Testis (tissue), 5 donors: ENCODE measurements at regions of chr2 and their contacts with region 1.

Region 1: GRCh38 chr2:61928826-61929461 is 23.5 kb downstream of the COMMD1 start:
- DNase-seq: no peak
- H3K4me3 ChIP-seq: no peak overlapping the region
- H3K27ac ChIP-seq: peak overlapping the region; percentile 50 to 51
- H3K4me1 ChIP-seq: no peaks in the 10 kb centered on the region
- H3K27me3 ChIP-seq: no peaks in the 10 kb centered on the region
- CTCF ChIP-seq: no peak
- POLR2A ChIP-seq: no peak

Region 2: GRCh38 chr2:61707969-61708852 is 220.7 kb before region 1 on chr2:
- intact Hi-C with region 1: no loop called
- DNase-seq: no peak
- H3K4me3 ChIP-seq: no peak overlapping the region
- H3K27ac ChIP-seq: no peak overlapping the region
- H3K4me1 ChIP-seq: no peaks in the 10 kb centered on the region
- H3K27me3 ChIP-seq: no peaks in the 10 kb centered on the region
- CTCF ChIP-seq: no peak
- POLR2A ChIP-seq: no peak

Region 3: GRCh38 chr2:62415019-62415431 is 486.1 kb after region 1 on chr2:
- intact Hi-C with region 1: loop called (anchors 5 kb)
- DNase-seq: no peak
- H3K4me3 ChIP-seq: no peak overlapping the region
- H3K27ac ChIP-seq: no peak overlapping the region
- H3K4me1 ChIP-seq: peaks cover 19% of the 10 kb centered on the region
- H3K27me3 ChIP-seq: no peaks in the 10 kb centered on the region
- CTCF ChIP-seq: no peak
- POLR2A ChIP-seq: no peak

Region 4: GRCh38 chr2:62787386-62787785 is 858.4 kb after region 1 on chr2:
- intact Hi-C with region 1: loop called (anchors 10 kb)
- DNase-seq: no peak
- H3K4me3 ChIP-seq: no peak overlapping the region
- H3K27ac ChIP-seq: no peak overlapping the region
- H3K4me1 ChIP-seq: peaks cover 6% of the 10 kb centered on the region
- H3K27me3 ChIP-seq: no peaks in the 10 kb centered on the region
- CTCF ChIP-seq: no peak
- POLR2A ChIP-seq: no peak